ENCODE measurements at regions of chr17 and their contacts with region 1.

Region 1: GRCh38 chr17:42027961-42028790 is 8.3 kb downstream of the NKIRAS2 start:
- DNase-seq: no peak
- H3K4me3 ChIP-seq: no peak overlapping the region
- H3K27ac ChIP-seq: no peak overlapping the region
- H3K4me1 ChIP-seq: peaks cover 0 to 13% (median 5%) of the 10 kb centered on the region in 4 donors
- H3K27me3 ChIP-seq: peaks cover 0 to 36% (median 19%) of the 10 kb centered on the region in 3 donors
- CTCF ChIP-seq: no peak
- EP300 ChIP-seq: no peak
- POLR2A ChIP-seq: no peak

Region 2: DNA sequence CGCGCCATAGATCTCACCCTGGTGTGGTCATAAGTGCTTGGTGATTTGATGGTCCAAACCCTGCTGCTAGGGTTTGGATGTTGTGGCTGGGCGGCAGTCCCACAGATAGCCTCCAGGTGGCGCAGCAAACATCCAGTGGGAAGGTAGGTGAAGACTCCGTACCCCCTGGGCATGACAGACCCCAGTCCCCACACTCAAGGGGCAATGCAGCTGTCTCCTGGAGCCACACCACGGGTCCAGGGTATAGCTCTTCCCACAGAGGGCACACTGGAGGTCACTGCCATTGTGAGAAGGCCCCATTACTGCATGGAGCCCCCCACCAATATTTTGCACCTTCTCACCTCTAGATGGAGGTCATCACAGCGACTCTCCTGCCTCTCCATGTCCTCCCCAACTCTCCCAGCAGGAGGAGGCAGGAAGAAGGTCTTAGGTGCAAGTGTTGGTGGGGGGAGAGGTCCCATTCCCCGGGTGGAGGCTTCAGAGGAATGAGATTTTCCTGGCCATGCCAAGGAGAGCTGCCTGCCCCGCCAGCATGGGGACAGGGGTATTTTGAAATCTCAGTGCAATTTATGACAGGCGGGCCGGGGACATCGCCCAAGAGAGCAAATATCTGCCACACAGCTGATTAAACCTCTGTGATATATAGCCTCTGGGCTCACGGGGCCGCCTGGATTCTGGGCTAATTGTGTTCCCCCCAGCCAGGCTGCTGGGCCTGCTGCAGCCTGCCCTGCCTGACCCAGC is 39.3 kb after region 1 on chr17:
- intact Hi-C with region 1: loop called (anchors 5 kb)
- DNase-seq: peak; percentile 75
- H3K4me3 ChIP-seq: no peak overlapping the region
- H3K27ac ChIP-seq: no peak overlapping the region
- H3K4me1 ChIP-seq: peaks cover 0 to 8% (median 7%) of the 10 kb centered on the region in 4 donors
- H3K27me3 ChIP-seq: peaks cover 8 to 41% (median 21%) of the 10 kb centered on the region in 3 donors
- CTCF ChIP-seq: peak; percentile 78 to 94 (median 83)
- EP300 ChIP-seq: no peak
- POLR2A ChIP-seq: no peak